ENCODE measurements at regions of chr1 and their contacts with region 1.

Region 1: DNA sequence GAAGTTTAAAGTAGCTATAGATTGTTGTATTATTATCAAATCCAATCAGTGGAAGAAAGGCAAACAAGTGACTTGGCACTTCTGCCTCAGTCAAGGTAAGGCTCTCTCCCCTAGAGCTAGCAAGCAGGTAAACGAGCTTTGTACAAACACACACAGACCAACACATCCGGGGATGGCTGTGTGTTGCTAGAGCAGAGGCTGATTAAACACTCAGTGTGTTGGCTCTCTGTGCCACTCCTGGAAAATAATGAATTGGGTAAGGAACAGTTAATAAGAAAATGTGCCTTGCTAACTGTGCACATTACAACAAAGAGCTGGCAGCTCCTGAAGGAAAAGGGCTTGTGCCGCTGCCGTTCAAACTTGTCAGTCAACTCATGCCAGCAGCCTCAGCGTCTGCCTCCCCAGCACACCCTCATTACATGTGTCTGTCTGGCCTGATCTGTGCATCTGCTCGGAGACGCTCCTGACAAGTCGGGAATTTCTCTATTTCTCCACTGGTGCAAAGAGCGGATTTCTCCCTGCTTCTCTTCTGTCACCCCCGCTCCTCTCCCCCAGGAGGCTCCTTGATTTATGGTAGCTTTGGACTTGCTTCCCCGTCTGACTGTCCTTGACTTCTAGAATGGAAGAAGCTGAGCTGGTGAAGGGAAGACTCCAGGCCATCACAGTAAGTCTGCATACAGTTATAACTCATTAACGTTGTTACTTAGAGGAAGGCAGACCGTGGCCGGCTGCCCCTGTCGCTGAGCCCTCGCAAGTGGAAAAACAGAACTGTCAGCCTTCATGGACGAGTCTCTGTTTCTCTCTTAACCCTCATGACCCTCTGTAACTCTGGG is at the start of gene PALMD:
- DNase-seq: peak; percentile 36 to 83
- H3K4me3 ChIP-seq: peak within 1 kb of the TSS; percentile 57
- H3K27ac ChIP-seq: peak within 1 kb of the TSS; percentile 78
- H3K4me1 ChIP-seq: peaks cover 53% of the 10 kb centered on the region
- H3K27me3 ChIP-seq: no peaks in the 10 kb centered on the region
- CTCF ChIP-seq: no peak
- total RNA-seq, gene PALMD: 0.68 and 1.2 TPM in 2 replicates

Region 2: DNA sequence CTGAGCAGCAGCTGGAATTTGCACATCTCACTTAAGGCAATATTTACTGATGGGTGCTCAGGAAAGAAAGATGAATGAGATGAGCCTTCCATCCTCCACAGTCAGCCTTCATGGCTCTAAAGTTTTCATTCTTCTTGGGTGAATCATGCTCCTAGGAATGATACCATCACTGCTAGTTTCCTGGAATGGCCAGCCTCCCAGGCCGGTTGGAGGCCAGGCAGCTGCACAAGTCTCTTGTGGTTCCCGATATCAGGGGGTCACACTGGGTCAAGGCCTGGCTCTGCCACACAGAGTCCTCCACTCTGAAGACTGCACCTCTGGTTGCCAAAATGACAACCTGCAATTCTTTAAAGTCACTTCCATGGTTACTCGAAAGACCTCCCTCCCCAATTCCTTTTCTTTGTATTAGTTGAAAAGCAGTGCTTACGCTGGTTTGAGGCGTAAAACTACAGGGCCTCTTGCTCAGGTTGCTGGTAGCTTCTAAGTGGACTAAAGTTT is 46.2 kb before region 1 on chr1:
- CTCF ChIA-PET with region 1: no interaction called
- POLR2A ChIA-PET with region 1: no interaction called
- intact Hi-C with region 1: loop called (anchors 5 kb)
- DNase-seq: peak; percentile 50 to 66
- H3K4me3 ChIP-seq: no peak overlapping the region
- H3K27ac ChIP-seq: no peak overlapping the region
- H3K4me1 ChIP-seq: peaks cover 8% of the 10 kb centered on the region; the same call in 1 of the 2 replicates
- H3K27me3 ChIP-seq: no peaks in the 10 kb centered on the region
- CTCF ChIP-seq: no peak

Region 3: GRCh38 chr1:99659755-99660210 is 13.9 kb after region 1 on chr1:
- CTCF ChIA-PET with region 1: no interaction called
- POLR2A ChIA-PET with region 1: interaction called, 4 read pairs
- intact Hi-C with region 1: loop called (anchors 1 kb)
- DNase-seq: peak; percentile 74 to 100
- H3K4me3 ChIP-seq: no peak overlapping the region; the same call in 1 of the 2 replicates
- H3K27ac ChIP-seq: peak overlapping the region; percentile 81
- H3K4me1 ChIP-seq: peaks cover 63% of the 10 kb centered on the region
- H3K27me3 ChIP-seq: no peaks in the 10 kb centered on the region
- CTCF ChIP-seq: no peak

Region 4: DNA sequence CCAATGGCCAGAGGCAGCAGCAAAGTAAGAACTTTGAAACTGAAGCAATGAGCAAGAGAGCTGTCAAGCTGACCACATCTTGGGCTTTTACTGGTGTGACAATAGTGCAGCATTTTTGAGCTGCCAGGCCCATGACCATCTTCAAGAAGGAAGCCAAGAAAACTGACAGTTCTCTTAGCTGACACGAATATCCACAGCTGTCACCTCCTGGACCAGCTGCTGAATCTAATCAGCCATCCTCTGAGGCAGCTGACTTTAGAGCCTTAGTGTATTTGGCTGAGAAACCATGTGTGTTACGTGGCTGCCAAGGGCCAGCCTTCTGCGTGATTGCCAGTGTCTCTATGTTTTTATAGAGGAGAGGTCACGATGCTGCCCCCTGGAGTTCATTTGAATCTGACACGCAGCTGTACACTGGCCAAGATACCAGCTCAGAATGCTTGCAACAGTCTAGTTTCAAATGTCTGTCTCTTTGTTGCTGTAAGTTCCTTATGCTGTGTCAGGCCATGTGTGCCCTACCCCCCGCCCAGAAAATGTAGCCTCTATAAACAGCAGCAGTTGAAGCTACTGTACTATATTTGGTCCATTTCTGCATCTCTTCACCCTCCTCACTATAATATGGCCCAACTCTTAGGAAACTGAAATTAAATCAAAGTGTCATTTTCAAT is 39.7 kb after region 1 on chr1:
- CTCF ChIA-PET with region 1: no interaction called
- POLR2A ChIA-PET with region 1: interaction called, 3 read pairs
- intact Hi-C with region 1: loop called (anchors 5 kb)
- DNase-seq: peak in 1 of 2 experiments; percentile 52
- H3K4me3 ChIP-seq: no peak overlapping the region
- H3K27ac ChIP-seq: no peak overlapping the region
- H3K4me1 ChIP-seq: peaks cover 12% of the 10 kb centered on the region; the same call in 1 of the 2 replicates
- H3K27me3 ChIP-seq: no peaks in the 10 kb centered on the region
- CTCF ChIP-seq: peak; percentile 76

Measured in PC-9 (cell line).